ENCODE measurements at regions of chr2 and their contacts with region 1.

Region 1: DNA sequence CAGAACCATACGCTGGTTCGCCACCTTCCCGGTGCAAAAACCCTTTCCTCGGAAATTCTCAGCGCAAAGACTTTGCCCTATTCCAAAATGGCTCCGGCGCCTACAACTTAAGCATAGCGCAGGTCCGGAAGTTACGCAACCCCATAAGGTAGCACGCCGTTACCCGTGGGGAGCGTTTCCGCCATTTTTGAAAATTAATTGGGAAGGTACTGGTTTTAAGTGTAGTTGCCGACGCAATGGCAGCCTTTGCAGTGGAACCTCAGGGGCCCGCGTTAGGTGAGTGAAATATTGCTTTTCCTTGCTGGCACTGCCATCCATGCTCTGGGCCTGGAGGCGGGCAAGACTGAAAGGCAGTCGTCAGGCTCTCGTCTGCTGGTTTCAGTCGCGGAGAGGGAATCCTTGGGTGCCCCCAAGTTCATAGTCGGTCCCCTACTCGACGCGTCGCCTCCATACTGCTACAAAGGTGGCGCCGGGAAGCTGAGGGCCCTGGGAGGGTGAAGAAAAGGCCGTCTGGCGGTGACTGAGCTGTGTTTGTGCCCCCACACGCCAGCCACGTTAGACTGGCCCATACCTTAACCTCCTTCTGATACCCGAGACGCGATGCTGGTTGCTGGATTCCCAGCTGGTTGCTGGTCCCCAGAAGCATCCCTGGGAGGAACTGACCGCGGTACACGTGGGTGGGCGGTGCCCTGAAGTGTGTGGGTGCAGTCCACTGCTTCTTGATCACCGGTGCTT is at the start of gene NUP35:
- DNase-seq: peak; percentile 92
- total RNA-seq, gene NUP35: 9.8 to 11.7 TPM

Region 2: DNA sequence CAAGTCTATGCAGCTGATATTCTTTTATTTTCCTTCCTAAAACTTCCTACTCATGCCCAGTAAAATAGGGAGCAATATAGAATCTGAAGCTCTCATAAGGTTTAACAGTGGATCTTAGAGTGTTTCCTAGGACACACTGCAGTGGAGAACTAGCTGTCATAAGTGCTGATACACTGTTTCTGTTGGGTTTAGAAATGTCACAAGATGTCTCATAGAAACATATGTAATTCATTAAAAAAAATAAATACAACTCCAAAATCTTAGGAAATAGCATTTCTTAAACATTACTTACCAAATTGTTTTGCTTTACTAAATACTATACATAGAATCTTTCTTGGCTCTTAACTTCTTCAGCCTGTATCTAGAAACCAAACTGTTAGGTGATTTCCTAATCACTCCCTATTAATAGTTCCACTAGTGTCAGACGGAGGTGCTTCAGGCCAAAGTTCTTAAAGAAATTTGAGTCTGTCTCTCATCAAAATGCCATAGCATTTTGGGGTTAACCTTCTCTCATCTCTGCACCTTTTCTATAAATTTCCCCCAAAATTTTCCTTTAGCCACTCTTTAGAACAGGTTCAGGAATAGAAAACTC is 1561.2 kb before region 1 on chr2:
- intact Hi-C with region 1: no loop called
- DNase-seq: no peak

Region 3: GRCh38 chr2:183059561-183059960 is 64.8 kb before region 1 on chr2:
- intact Hi-C with region 1: loop called in 1 of 2 experiments (anchors 2 kb)
- DNase-seq: no peak

Region 4: DNA sequence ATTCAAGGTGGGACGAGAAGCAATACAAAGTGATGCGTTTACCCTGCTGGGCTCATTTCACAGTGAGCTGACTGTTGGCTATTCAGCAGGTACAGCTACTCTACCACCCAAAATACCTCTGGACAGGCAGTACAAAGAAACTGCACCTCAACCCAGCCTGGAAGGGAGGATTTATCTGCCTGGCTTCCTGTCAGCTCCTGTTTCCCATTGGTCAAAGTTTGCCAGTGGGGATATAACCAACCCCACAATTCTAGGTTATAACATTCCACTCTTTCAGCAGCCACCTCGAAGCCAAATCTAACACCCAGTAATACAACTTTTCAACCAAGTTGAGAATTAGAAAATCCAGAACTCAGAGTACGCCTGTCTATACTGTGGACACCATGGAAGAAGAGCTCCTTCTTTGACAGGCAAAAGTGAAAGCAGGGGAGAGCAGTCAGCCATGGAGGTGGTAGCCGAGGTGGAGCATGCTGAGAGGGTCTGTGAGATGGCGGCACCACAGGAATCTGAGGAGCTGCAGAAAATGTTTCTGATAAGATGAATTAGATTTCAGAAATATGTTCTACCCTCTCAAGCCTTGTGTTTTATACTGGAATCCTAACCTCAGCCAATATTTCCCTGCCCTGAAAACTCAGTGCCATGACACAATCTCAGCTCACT is 35.1 kb before region 1 on chr2:
- intact Hi-C with region 1: loop called in 1 of 2 experiments (anchors 5 kb)
- DNase-seq: no peak

Region 5: GRCh38 chr2:183487331-183487730 is 362.9 kb after region 1 on chr2:
- intact Hi-C with region 1: no loop called
- DNase-seq: no peak